Activated CD4-positive, alpha-beta T cell treated with anti-CD3 and anti-CD28 coated beads for 36 hours (primary cell): ENCODE measurements at regions of chr20 and their contacts with region 1.

Region 1: GRCh38 chr20:561437-562231 is 18.0 kb upstream of the CSNK2A1 start:
- DNase-seq: peak; percentile 76
- ATAC-seq: peak; percentile 84
- H3K4me3 Mint-ChIP-seq: no peak overlapping the region
- H3K27ac Mint-ChIP-seq: no peak overlapping the region
- H3K4me1 Mint-ChIP-seq: no peaks in the 10 kb centered on the region
- H3K27me3 Mint-ChIP-seq: peaks cover 2% of the 10 kb centered on the region

Region 2: GRCh38 chr20:189611-190010 is 372.0 kb before region 1 on chr20 and contains the start of gene DEFB128:
- CTCF ChIA-PET with region 1: no interaction called
- POLR2A ChIA-PET with region 1: no interaction called
- intact Hi-C with region 1: no loop called
- DNase-seq: no peak
- ATAC-seq: no peak
- H3K4me3 Mint-ChIP-seq: no peak within 1 kb of the TSS
- H3K27ac Mint-ChIP-seq: no peak within 1 kb of the TSS
- H3K4me1 Mint-ChIP-seq: no peaks in the 10 kb centered on the region
- H3K27me3 Mint-ChIP-seq: peaks cover 23% of the 10 kb centered on the region
- total RNA-seq, gene DEFB128: not detected

Region 3: GRCh38 chr20:645318-646106 is 83.9 kb after region 1 on chr20:
- CTCF ChIA-PET with region 1: interaction called, 20 read pairs
- POLR2A ChIA-PET with region 1: no interaction called
- intact Hi-C with region 1: loop called (anchors 1 kb)
- DNase-seq: peak; percentile 83
- ATAC-seq: peak; percentile 87
- H3K4me3 Mint-ChIP-seq: no peak overlapping the region
- H3K27ac Mint-ChIP-seq: no peak overlapping the region
- H3K4me1 Mint-ChIP-seq: peaks cover 14% of the 10 kb centered on the region
- H3K27me3 Mint-ChIP-seq: peaks cover 9% of the 10 kb centered on the region

Region 4: DNA sequence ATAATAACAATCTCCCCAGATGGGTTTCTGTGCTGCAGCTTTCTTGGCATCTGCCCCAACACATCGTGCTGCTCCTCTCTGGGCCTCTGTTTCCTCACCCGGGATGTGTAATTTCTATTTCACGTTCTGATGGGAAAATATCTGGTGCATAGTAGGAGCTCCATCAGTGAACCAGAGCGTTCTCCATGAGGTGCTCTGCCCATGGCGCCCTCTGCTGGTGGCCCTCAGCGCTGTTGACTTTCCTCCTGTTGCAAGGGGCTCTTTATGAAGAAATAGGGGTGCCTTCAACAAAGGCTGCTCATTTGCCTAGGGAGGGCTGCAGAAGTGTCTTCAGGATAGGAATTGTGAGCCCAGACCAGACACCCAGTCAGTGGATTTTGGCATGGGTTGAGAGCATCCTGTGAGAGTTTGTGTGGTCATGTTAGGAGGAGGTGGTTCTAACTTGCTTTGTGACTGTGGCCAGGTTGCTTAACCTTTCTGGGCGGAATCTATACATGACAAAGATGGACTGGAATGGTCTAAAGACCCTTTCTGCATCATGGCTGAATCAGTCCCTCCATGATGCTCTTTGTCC is 105.8 kb after region 1 on chr20:
- CTCF ChIA-PET with region 1: interaction called, 9 read pairs
- POLR2A ChIA-PET with region 1: no interaction called
- intact Hi-C with region 1: loop called in 1 of 2 experiments (anchors 1 kb)
- DNase-seq: peak; percentile 83
- ATAC-seq: peak; percentile 66
- H3K4me3 Mint-ChIP-seq: no peak overlapping the region
- H3K27ac Mint-ChIP-seq: no peak overlapping the region
- H3K4me1 Mint-ChIP-seq: peaks cover 4% of the 10 kb centered on the region
- H3K27me3 Mint-ChIP-seq: peaks cover 47% of the 10 kb centered on the region

Region 5: DNA sequence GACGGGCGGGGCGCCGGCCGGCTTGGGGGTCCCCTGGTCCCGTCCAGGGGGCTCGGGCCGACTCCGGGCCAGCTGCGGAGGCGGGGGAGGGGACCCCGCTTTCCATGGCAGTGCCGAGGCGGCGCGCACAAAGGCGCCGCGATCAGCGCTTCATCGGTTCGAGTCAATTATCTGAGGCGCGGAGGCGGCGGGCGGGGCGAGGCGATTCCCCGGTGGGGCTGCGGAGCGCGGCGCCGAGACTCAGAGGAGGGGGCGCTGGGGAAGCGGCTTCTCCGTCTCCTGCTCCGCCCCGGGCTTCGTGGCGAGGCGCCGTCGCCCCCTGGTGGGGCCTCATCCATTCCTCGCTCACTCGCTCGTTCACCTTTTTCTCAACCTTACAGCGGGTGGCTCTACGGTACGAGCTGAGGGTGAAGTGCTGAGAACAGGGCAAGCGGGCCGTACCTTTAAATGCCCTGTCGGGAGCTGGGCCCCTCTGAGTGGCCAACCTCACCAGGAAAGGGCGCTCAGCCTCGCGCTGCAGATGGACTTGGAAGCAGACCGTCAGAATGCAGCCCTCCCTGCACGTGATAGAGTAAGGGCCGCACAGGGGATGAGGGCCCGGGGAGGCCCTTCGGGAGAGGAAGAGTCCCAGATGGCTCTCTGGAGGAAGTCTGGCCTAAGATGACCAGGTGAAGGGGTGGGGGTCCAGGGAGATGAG is 166.8 kb after region 1 on chr20:
- CTCF ChIA-PET with region 1: no interaction called
- POLR2A ChIA-PET with region 1: no interaction called
- intact Hi-C with region 1: loop called in 1 of 2 experiments (anchors 1 kb)
- DNase-seq: peak; percentile 80
- ATAC-seq: peak; percentile 91
- H3K4me3 Mint-ChIP-seq: no peak overlapping the region
- H3K27ac Mint-ChIP-seq: no peak overlapping the region
- H3K4me1 Mint-ChIP-seq: no peaks in the 10 kb centered on the region
- H3K27me3 Mint-ChIP-seq: peaks cover 34% of the 10 kb centered on the region

Region 6: DNA sequence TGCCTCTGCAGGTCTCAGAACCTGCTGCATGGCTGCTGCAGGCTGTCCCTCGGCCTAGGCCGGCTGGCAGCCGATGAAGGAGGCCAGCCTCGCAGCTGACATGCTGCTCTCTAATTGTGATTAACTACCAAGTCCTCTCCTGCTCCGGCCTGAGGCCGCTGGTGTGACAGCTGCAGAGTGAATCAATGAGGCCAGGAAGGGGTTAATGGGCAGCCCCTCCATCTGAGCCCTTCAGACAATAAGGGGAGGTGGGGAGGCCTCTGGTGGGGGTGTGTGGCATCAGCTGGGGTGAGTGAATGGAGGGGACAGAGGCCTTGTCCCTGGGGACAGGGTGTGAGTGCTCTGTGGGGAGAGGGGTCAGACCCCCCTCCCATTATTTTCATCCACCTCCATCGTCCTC is 172.2 kb after region 1 on chr20:
- CTCF ChIA-PET with region 1: interaction called, 8 read pairs
- POLR2A ChIA-PET with region 1: no interaction called
- intact Hi-C with region 1: loop called (anchors 1 to 5 kb)
- DNase-seq: no peak
- ATAC-seq: no peak
- H3K4me3 Mint-ChIP-seq: no peak overlapping the region
- H3K27ac Mint-ChIP-seq: no peak overlapping the region
- H3K4me1 Mint-ChIP-seq: no peaks in the 10 kb centered on the region
- H3K27me3 Mint-ChIP-seq: peaks cover 15% of the 10 kb centered on the region

Region 7: GRCh38 chr20:739736-740135 is 178.1 kb after region 1 on chr20:
- CTCF ChIA-PET with region 1: interaction called, 8 read pairs
- POLR2A ChIA-PET with region 1: no interaction called
- intact Hi-C with region 1: loop called (anchors 1 to 5 kb)
- DNase-seq: no peak
- ATAC-seq: no peak
- H3K4me3 Mint-ChIP-seq: no peak overlapping the region
- H3K27ac Mint-ChIP-seq: no peak overlapping the region
- H3K4me1 Mint-ChIP-seq: no peaks in the 10 kb centered on the region
- H3K27me3 Mint-ChIP-seq: peaks cover 18% of the 10 kb centered on the region

Region 8: GRCh38 chr20:2261105-2261504 is 1699.5 kb after region 1 on chr20:
- CTCF ChIA-PET with region 1: no interaction called
- POLR2A ChIA-PET with region 1: no interaction called
- intact Hi-C with region 1: no loop called
- DNase-seq: no peak
- ATAC-seq: no peak
- H3K4me3 Mint-ChIP-seq: no peak overlapping the region
- H3K27ac Mint-ChIP-seq: no peak overlapping the region
- H3K4me1 Mint-ChIP-seq: no peaks in the 10 kb centered on the region
- H3K27me3 Mint-ChIP-seq: peaks cover 11% of the 10 kb centered on the region